Ascending aorta (tissue), 2 donors: ENCODE measurements at regions of chr1 and their contacts with region 1.

Region 1: GRCh38 chr1:67570473-67571143 is 114.4 kb upstream of the GADD45A start:
- DNase-seq: no peak
- H3K4me3 ChIP-seq: no peak overlapping the region
- H3K27ac ChIP-seq: peak overlapping the region; percentile 34 to 70
- H3K4me1 ChIP-seq: peaks cover 7 to 16% of the 10 kb centered on the region in 2 donors
- H3K27me3 ChIP-seq: no peaks in the 10 kb centered on the region
- CTCF ChIP-seq: no peak

Region 2: DNA sequence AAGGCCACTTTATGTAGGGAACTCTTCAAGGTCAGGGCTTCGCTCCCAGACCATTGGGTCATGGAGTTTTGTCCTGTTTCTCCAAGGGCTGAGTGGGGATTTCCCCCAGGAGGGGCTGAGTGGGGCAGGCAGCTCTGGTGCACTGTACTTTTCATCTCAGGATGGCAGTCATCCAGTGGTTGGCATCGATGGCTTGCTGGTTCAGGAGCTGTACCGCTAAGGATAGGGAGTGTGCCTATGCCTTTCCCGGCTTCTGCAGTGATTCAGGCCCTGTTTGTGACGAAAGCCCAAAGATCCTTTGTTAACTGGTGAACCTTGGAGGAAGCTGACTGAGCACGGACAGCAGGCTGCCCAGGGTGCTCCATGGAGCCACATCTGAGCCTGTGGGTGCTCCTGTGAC is 14.3 kb after region 1 on chr1:
- intact Hi-C with region 1: loop called (anchors 2 kb)
- DNase-seq: peak; percentile 30 to 82
- H3K4me3 ChIP-seq: no peak overlapping the region
- H3K27ac ChIP-seq: peak overlapping the region; percentile 80 to 90
- H3K4me1 ChIP-seq: peaks cover 7 to 53% of the 10 kb centered on the region in 2 donors
- H3K27me3 ChIP-seq: no peaks in the 10 kb centered on the region
- CTCF ChIP-seq: no peak